ENCODE measurements at regions of chr12 and their contacts with region 1.

Region 1: GRCh38 chr12:126784328-126784921 is 1482.5 kb upstream of the TMEM132C start:
- DNase-seq: no peak

Region 2: DNA sequence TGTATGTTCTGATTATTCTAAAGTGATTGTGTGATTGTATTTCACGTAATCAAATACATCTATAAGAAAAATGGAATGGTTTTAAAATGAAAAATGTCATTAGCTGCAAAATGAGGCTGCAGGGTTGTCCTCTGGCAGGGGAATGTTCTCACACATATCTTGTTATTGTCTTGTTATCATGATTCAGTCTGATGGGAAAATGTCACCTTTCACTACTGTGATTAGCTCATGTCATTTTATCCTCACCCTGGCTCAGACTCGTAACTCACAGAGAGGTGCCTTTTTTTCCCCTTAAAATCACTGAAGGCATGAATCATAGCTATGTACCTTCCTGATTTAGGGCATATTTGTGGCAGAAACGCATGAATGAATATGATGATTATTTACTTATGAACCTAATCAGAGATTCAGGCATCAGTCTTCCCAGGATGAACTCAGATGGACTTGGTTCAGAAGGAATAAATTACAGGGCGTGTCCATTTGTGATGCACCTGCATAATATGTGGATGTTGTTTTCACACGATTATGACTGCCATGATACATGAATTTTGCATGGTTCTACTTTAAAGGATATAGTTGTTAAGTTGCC is 380.0 kb before region 1 on chr12:
- intact Hi-C with region 1: no loop called
- DNase-seq: no peak

Region 3: DNA sequence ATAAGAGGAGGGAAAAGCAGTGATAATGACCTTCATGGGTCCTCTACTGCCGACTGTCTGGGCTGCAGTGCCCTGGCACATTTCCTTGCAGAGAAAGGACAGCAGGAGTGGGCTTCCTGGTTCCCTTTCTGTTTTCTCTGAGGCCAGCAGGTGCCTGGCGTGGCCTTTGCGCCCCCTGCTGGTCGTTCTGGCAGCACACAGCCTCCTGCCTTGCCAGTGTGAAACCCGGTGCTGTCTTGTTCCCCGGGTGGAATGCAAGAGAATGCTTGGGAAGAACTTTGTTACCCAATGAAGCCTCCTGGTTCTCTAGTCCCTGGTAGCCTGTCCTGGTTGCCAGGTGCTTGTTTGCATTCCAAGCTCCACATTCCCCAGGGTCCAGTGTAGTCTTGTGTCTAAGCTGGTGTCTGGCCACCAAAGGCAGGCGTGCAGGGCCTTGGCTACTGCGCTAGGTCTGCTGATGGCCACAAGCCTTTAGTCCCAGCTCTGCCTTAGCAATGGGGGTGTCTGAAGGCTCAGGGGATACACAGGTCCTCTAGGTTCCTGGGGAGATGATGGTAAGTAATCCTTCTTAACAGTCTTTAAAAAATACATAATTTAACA is 90.1 kb after region 1 on chr12:
- intact Hi-C with region 1: loop called (anchors 10 kb)
- DNase-seq: no peak

Region 4: DNA sequence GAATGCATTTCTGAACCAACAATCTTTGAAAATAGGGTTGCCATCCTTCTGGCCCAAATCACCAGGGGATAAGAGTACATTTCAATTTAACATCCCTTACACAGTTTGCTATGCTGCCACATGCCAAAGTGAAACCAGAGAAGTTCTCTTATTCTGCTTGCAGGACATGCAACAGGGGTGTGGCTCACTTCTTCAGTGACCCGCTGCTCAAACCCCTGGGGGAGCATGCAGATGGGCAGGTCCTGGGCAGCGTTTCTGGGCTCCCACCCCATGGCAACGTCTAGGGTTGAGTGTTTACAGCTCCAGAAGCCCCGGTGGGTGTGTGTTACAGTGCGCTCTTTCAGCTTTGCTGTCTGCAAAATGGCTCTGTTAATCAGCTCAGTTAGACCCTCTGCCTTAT is 176.3 kb after region 1 on chr12:
- intact Hi-C with region 1: no loop called
- DNase-seq: no peak

Region 5: GRCh38 chr12:128043317-128043716 is 1258.9 kb after region 1 on chr12:
- intact Hi-C with region 1: no loop called
- DNase-seq: no peak

Measured in cardiac septum (tissue), 1 donor.